GM10248 (cell line): ENCODE measurements at regions of chr19 and their contacts with region 1.

Region 1: DNA sequence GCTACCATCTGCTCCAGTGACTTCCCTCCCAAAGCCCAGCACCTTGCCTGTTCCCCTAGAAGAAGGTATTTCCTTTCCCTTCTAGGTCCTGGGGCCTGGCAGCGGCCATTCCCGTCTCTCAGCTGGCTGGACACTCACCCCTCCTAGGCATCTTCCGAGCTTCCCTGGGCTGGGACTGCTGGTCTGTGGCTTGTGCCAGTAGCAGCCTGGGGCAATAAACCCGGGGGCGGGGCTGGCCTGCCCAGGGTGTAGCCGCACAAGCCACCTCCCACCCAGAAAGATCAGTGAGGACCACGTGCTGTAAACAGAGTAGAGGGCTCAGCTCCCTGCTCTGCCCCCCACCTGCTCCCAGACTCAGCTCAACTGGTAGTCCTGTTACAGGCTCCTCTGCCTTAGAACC is 15.0 kb downstream of the LIPE start:
- DNase-seq: no peak
- CTCF ChIP-seq: no peak

Region 2: DNA sequence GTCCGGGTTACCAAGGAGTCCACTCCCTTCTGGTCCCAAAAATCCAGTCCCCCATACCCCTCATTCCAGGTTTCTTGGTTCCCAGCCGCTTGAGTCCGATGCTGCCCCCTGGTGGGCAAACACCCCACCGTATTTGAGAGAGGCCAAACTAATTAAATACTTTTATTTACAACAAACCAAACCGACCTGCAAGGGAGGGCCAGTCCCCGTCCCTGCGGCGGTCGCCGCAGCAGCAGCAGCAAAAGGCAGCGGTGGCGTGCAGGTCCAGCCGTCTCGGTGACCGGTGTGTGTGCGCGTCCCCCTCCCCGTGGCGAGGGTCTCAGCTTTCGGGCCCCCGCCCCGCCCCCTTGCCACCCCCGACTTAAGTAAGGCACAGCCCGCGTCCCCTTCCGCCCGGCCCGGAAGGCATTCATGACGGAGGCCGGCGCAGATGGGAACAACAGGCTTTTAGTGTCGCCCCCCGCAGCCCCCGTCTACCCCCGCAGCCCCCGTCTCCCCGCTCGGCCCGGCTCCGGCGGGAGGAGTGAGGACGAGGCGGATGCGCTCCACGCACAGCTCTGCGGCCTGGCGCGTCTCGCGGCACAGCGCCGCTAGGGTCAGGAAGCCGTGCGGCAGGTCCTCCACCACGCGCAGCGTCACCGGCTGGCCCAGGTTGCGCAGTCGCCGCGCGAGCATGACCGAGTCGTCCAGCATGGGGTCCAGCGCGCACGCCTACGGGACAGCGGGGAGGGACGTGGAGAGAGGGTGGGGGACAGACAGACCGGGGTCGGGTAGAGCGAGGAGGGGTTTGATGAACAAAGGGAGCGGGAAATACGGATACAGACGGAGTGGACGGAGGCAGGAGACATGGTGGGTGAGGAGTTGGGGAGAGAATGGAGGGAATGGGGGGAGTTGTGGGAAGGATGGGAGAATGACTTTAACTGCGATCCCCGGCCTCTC is 10.6 kb before region 1 on chr19:
- CTCF ChIA-PET with region 1: interaction called, 29 read pairs
- POLR2A ChIA-PET with region 1: no interaction called
- DNase-seq: peak; percentile 73
- CTCF ChIP-seq: peak; percentile 73

Region 3: DNA sequence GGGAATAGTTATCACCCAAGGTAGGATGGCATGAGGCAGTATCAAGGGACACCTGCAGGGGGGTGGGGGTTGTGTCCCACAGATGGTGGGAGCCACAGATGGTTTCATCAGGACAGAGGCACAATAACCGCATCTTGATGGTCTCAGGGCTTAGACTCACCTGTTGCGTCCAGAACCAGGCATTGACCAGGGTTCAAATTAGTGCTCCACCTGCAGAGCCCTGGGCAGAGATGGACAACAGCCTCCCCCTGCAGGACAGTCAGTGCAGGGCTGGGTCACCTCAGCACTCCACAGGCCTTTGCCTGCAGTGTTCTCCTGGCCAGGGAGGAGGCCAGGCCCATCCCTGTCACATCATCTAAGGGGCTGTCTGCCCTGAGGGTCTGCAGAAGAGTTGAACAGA is 130.6 kb after region 1 on chr19:
- CTCF ChIA-PET with region 1: no interaction called
- POLR2A ChIA-PET with region 1: no interaction called
- DNase-seq: no peak
- CTCF ChIP-seq: peak; percentile 1